ENCODE measurements at regions of chr19 and their contacts with region 1.

Region 1: GRCh38 chr19:16957151-16957701 is 68.4 kb downstream of the F2RL3 start:
- DNase-seq: peak; percentile 5
- H3K4me3 ChIP-seq: no peak overlapping the region
- H3K27ac ChIP-seq: no peak overlapping the region
- H3K4me1 ChIP-seq: peaks cover 8% of the 10 kb centered on the region
- H3K27me3 ChIP-seq: no peaks in the 10 kb centered on the region
- CTCF ChIP-seq: no peak

Region 2: GRCh38 chr19:16920758-16921210 is 36.4 kb before region 1 on chr19:
- CTCF ChIA-PET with region 1: no interaction called
- dilution Hi-C with region 1: no loop called
- in situ Hi-C with region 1: no loop called
- intact Hi-C with region 1: loop called (anchors 2 kb)
- DNase-seq: peak; percentile 96
- H3K4me3 ChIP-seq: peak overlapping the region; percentile 3 to 46 (median 36)
- H3K27ac ChIP-seq: peak overlapping the region; percentile 93
- H3K4me1 ChIP-seq: peaks cover 14% of the 10 kb centered on the region
- H3K27me3 ChIP-seq: no peaks in the 10 kb centered on the region
- CTCF ChIP-seq: peak in 1 of 2 donors; percentile 3

Region 3: DNA sequence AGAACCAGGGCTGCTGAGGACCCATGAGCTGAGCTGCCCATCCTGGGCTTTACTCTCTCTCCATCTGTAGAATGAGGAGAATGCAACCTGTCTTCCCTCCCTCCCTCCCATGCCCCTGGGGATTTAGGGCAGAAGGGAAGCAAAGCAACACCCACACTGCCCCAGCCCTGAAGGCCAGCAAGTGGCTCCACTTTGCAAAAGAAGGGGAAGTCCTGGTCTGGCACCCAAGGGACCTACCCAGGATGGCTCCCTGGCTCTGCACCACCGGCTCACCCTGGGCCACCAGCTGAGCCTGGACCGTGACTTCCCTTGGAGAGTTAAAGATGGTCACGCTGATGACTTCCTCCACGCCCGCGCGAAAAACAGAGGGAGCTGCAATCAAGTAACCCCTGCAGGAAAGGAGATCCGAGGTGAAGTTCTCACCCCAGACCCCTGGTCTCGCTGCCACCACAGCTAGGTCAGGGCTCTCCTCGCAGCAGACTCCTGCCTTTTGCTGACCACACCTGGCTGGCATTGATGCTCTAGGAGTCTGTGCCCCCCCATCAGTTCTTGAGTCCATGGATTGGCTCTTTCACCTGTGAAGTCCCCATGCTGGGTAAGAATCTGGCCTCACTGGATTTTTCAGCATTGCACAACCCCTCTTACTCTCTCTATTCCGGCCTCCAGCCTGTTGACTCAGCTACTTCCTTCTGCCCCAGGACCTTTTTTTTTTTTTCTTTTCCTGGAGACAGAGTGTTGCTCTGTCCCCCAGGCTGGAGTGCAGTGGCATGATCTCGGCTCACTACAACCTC is 64.8 kb after region 1 on chr19:
- CTCF ChIA-PET with region 1: no interaction called
- dilution Hi-C with region 1: no loop called
- in situ Hi-C with region 1: no loop called
- intact Hi-C with region 1: no loop called
- DNase-seq: peak; percentile 92
- H3K4me3 ChIP-seq: no peak overlapping the region
- H3K27ac ChIP-seq: peak overlapping the region; percentile 1
- H3K4me1 ChIP-seq: peaks cover 24% of the 10 kb centered on the region
- H3K27me3 ChIP-seq: no peaks in the 10 kb centered on the region
- CTCF ChIP-seq: no peak

Measured in mammary epithelial cell (primary cell).